ENCODE measurements at regions of chr9 and their contacts with region 1.

Region 1: GRCh38 chr9:8351436-8351835 is 551.9 kb upstream of the DMAC1 start:
- DNase-seq: no peak
- ATAC-seq: no peak
- H3K4me3 ChIP-seq: no peak overlapping the region
- H3K4me3 Mint-ChIP-seq: no peak overlapping the region
- H3K27ac ChIP-seq: no peak overlapping the region
- H3K27ac Mint-ChIP-seq: no peak overlapping the region
- H3K4me1 ChIP-seq: no peaks in the 10 kb centered on the region
- H3K4me1 Mint-ChIP-seq: no peaks in the 10 kb centered on the region
- H3K27me3 ChIP-seq: no peaks in the 10 kb centered on the region
- H3K27me3 Mint-ChIP-seq: peaks cover 0 to 5% of the 10 kb centered on the region in 2 donors

Region 2: DNA sequence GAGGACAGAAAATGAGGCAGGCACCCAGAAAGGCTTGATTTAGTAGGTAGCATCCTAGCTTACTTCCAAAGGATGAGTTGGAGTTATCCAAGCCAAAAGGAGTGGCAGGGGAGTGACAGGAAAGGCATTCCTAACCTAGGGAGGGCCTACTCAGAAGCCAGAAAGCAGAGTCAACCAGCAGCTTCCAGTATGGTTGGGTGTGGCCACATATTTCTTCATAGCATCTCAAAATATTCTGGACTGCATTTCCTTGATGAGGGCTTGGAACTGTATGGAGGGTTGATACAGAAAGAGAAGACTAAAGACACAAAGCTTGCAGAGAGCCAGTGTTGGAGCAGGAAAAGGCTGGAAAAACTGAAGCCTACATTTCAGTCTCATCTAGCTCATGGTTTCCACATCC is 104.9 kb after region 1 on chr9:
- CTCF ChIA-PET with region 1: no interaction called
- POLR2A ChIA-PET with region 1: interaction called in 1 of 2 experiments, 12 read pairs
- DNase-seq: no peak
- ATAC-seq: no peak
- H3K4me3 ChIP-seq: no peak overlapping the region
- H3K4me3 Mint-ChIP-seq: no peak overlapping the region
- H3K27ac ChIP-seq: no peak overlapping the region
- H3K27ac Mint-ChIP-seq: no peak overlapping the region
- H3K4me1 ChIP-seq: no peaks in the 10 kb centered on the region
- H3K4me1 Mint-ChIP-seq: no peaks in the 10 kb centered on the region
- H3K27me3 ChIP-seq: no peaks in the 10 kb centered on the region
- H3K27me3 Mint-ChIP-seq: no peaks in the 10 kb centered on the region

Region 3: GRCh38 chr9:9229269-9229668 is 877.8 kb after region 1 on chr9:
- CTCF ChIA-PET with region 1: no interaction called
- POLR2A ChIA-PET with region 1: no interaction called
- DNase-seq: no peak
- ATAC-seq: no peak
- H3K4me3 ChIP-seq: no peak overlapping the region
- H3K4me3 Mint-ChIP-seq: no peak overlapping the region
- H3K27ac ChIP-seq: no peak overlapping the region
- H3K27ac Mint-ChIP-seq: no peak overlapping the region
- H3K4me1 ChIP-seq: no peaks in the 10 kb centered on the region
- H3K4me1 Mint-ChIP-seq: no peaks in the 10 kb centered on the region
- H3K27me3 ChIP-seq: no peaks in the 10 kb centered on the region
- H3K27me3 Mint-ChIP-seq: no peaks in the 10 kb centered on the region